ENCODE measurements at regions of chr20 and their contacts with region 1.

Region 1: GRCh38 chr20:53884859-53885541 is 185.4 kb downstream of the BCAS1 start:
- DNase-seq: no peak
- H3K4me3 ChIP-seq: no peak overlapping the region
- H3K4me3 Mint-ChIP-seq: peak overlapping the region in 2 of 8 donors; percentile 11 to 52
- H3K27ac ChIP-seq: no peak overlapping the region
- H3K27ac Mint-ChIP-seq: peak overlapping the region in 4 of 7 donors; percentile 44 to 77 (median 62)
- H3K4me1 ChIP-seq: peaks cover 19% of the 10 kb centered on the region
- H3K4me1 Mint-ChIP-seq: peaks cover 11 to 23% (median 19%) of the 10 kb centered on the region in 4 donors
- H3K27me3 ChIP-seq: no peaks in the 10 kb centered on the region
- H3K27me3 Mint-ChIP-seq: peaks cover 0 to 1% of the 10 kb centered on the region in 2 donors

Region 2: GRCh38 chr20:53813636-53814429 is 71.2 kb before region 1 on chr20:
- CTCF ChIA-PET with region 1: no interaction called
- POLR2A ChIA-PET with region 1: no interaction called
- intact Hi-C with region 1: no loop called
- DNase-seq: no peak
- H3K4me3 ChIP-seq: no peak overlapping the region
- H3K4me3 Mint-ChIP-seq: no peak overlapping the region
- H3K27ac ChIP-seq: no peak overlapping the region
- H3K27ac Mint-ChIP-seq: peak overlapping the region in 1 of 7 donors; percentile 74
- H3K4me1 ChIP-seq: peaks cover 8% of the 10 kb centered on the region
- H3K4me1 Mint-ChIP-seq: peaks cover 17 to 41% (median 26%) of the 10 kb centered on the region in 4 donors
- H3K27me3 ChIP-seq: no peaks in the 10 kb centered on the region
- H3K27me3 Mint-ChIP-seq: no peaks in the 10 kb centered on the region

Region 3: DNA sequence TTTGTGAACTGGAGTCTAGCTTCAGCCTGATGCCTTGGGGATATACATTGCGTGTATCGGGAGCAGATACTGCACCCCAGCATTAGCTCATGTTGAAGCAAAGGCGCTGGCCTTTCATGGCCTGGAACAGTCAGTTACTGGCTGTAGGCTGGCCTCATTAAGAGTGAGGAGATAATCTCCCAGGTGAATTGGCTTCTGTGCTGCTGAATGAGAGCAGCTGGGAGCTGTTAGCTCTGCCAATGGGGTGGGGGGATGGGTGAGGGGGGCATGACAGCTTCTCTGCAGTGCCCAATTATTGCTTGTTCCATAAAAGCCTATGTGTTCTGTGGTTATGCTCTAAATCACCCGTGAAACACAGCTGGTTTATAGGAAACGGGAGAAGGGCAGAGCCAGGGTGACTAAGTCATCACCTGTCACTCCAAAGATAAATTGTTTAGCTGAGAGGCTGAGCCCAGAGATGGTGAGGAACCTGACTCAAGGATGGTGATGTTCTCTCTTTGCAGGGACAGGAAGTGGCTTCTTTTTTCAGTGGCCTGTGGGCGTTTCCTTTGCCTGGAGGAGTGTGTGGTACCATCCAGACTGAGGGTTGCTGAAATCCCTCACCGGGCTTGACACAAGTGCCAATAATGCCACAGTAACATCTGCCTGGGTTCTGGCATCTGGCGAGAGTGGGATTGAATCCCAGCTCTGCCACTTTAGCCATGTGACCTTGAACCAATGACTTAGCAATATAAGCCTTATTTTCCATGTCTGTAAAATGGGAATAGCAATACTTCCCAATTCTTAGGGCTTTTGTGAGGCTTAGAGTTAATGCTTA is 14.6 kb after region 1 on chr20:
- CTCF ChIA-PET with region 1: interaction called, 4 read pairs
- POLR2A ChIA-PET with region 1: interaction called, 13 read pairs
- intact Hi-C with region 1: no loop called
- DNase-seq: peak; percentile 64 to 81 (median 68)
- H3K4me3 ChIP-seq: no peak overlapping the region
- H3K4me3 Mint-ChIP-seq: peak overlapping the region in 5 of 8 donors; percentile 3 to 56 (median 47)
- H3K27ac ChIP-seq: peak overlapping the region; percentile 6
- H3K27ac Mint-ChIP-seq: peak overlapping the region; percentile 65 to 88 (median 85)
- H3K4me1 ChIP-seq: peaks cover 17% of the 10 kb centered on the region
- H3K4me1 Mint-ChIP-seq: peaks cover 12 to 31% (median 24%) of the 10 kb centered on the region in 4 donors
- H3K27me3 ChIP-seq: no peaks in the 10 kb centered on the region
- H3K27me3 Mint-ChIP-seq: no peaks in the 10 kb centered on the region

Measured in CD4-positive, alpha-beta memory T cell (primary cell).